Activated CD4-positive, alpha-beta T cell treated with anti-CD3 and anti-CD28 coated beads, Interleukin-2, amount 10 ng/mL, durations not matched to agents 7 days and 5 days (primary cell): ENCODE measurements at regions of chr12 and their contacts with region 1.

Region 1: DNA sequence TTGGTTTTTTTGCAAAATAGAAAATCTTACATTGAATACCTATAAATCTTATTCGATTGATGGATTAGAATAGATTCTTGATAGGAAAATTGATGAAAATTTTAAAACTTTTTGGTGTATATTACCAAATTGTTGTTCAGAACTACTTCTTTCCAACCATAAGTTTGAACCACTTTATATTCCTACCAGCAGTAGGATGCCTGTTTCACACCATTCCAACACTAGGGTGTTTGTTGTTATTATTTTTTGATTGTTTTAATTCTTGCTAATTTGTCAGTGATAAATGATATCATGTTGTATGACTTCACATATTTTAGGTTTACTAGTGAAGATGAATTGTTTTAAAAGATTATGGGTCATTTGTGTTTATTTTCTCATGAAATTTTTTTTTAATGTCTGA is 43.4 kb downstream of the UTP20 start:
- DNase-seq: no peak
- H3K4me3 Mint-ChIP-seq: no peak overlapping the region
- H3K27ac Mint-ChIP-seq: no peak overlapping the region
- H3K4me1 Mint-ChIP-seq: no peaks in the 10 kb centered on the region
- H3K27me3 Mint-ChIP-seq: no peaks in the 10 kb centered on the region

Region 2: DNA sequence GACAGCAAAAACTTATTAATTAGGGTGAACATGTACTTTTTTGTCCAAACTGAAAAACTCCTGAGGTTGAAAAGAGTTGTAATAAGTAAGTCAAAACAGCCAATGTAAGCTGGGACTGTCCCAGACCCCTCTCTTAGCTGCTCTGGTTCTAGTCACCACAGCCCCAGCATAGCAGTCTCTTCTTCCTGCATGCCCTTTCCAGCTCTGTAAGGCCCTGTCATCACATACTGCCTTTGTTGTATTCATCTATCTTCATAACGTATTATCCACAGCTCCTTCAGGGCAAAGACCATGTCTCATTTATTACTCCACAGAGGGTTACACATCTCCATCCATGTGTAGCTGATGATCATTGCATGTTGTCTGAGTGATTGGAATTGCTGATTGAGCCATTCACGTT is 13.2 kb after region 1 on chr12:
- CTCF ChIA-PET with region 1: interaction called, 12 read pairs
- POLR2A ChIA-PET with region 1: no interaction called
- DNase-seq: no peak
- H3K4me3 Mint-ChIP-seq: no peak overlapping the region
- H3K27ac Mint-ChIP-seq: no peak overlapping the region
- H3K4me1 Mint-ChIP-seq: no peaks in the 10 kb centered on the region
- H3K27me3 Mint-ChIP-seq: no peaks in the 10 kb centered on the region